GM10248 (cell line): ENCODE measurements at regions of chr11 and their contacts with region 1.

Region 1: GRCh38 chr11:118198370-118198769 is 21.9 kb upstream of the SCN2B start:
- DNase-seq: peak; percentile 80
- CTCF ChIP-seq: peak; percentile 89

Region 2: GRCh38 chr11:118002541-118003423 is 195.6 kb before region 1 on chr11:
- CTCF ChIA-PET with region 1: no interaction called
- POLR2A ChIA-PET with region 1: no interaction called
- DNase-seq: no peak
- CTCF ChIP-seq: no peak

Region 3: GRCh38 chr11:118171269-118172062 is 26.9 kb before region 1 on chr11:
- CTCF ChIA-PET with region 1: interaction called, 21 read pairs
- POLR2A ChIA-PET with region 1: no interaction called
- DNase-seq: peak; percentile 88
- CTCF ChIP-seq: peak; percentile 93

Region 4: DNA sequence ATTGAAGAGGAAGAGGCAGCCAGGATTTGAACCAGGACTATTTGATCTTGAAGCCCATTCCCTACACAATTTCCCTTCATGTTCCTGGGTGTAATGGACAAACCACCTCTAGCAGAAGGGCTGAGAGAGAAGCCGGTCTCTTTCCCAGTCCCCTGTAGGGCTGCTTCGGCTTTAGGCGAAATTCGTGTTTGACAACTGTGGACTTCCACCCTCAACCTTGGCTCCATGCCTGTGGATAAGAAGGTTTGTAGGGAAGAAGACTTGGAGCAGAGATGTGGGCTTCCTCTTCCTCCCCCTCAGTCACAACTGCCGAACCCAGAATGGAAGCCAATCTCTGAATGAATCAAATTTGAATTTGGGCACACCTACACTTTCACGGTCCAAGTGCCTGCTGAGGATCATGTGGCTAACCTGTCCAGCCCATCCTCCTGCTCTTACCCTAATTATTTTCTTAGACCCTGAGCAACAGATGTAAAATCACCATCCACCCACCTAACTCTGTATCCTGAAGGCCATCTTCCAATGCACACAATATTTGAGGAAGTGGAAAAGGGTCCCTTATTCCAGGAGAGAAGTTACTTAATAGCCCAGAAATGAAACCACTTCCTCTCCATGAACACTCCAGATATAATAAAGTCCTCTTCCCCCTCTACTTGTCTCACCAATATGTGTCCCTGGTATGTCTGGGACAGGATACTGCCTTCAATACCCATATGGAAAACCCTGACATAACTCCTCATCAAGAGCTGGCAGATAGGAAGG is 11.8 kb before region 1 on chr11:
- CTCF ChIA-PET with region 1: interaction called, 15 read pairs
- POLR2A ChIA-PET with region 1: no interaction called
- DNase-seq: no peak
- CTCF ChIP-seq: no peak

Region 5: GRCh38 chr11:118227865-118228785 is 29.8 kb after region 1 on chr11:
- CTCF ChIA-PET with region 1: interaction called, 10 read pairs
- POLR2A ChIA-PET with region 1: no interaction called
- DNase-seq: peak; percentile 35
- CTCF ChIP-seq: no peak

Region 6: DNA sequence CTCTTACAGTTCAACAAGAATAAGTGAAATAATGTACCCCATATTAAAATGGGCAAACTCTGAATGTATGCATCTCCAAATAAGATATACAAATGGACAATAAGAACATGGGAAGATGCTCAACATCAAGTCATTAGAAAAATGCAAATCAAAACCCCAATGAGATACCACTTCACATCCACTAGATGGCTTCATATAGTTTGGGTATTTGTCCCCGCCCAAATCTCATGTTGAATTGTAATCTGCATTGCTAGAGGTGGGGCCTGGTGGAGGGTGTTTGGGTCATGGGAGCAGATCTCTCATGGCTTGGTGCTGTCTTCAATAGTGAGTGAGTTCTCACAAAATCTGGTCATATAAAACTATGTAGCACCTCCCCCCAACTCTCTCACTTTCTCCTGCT is 60.0 kb after region 1 on chr11:
- CTCF ChIA-PET with region 1: interaction called, 20 read pairs
- POLR2A ChIA-PET with region 1: no interaction called
- DNase-seq: no peak
- CTCF ChIP-seq: no peak

Region 7: GRCh38 chr11:118290923-118291322 is 92.6 kb after region 1 on chr11:
- CTCF ChIA-PET with region 1: interaction called, 15 read pairs
- POLR2A ChIA-PET with region 1: no interaction called
- DNase-seq: peak; percentile 50
- CTCF ChIP-seq: peak; percentile 61

Region 8: DNA sequence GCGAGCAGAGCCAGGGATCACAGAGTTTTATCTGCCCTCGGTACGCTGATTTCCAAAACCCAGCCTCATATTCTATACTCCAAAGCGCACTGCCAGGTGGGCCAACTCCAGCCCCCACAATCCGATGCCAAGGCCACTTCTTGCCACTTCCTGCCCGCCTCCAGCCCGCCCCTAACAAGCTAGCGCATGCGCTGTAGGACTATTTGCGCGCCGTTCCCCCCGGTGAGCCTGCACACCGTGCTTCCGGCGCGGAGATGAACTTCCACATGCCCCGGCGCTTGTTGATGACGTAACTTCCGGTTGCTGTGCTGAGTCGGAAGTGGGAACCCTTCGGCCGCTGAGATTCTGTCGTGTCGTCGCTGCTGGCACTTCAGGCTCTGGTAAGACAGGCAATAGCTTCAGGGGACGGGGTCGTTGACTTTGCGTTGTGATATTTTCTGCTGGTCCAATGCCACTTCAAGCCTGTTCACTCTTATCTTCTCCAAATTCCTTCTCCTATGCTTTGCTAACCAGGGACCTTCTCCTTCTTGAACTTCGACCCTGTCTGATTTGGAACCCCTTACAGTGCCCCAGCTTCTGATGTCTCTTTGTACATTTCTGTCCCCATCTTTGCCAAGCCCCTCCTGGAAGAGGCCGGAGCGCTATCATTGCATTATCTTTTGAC is 161.1 kb after region 1 on chr11 and contains the start of gene UBE4A:
- CTCF ChIA-PET with region 1: interaction called, 10 read pairs
- POLR2A ChIA-PET with region 1: no interaction called
- DNase-seq: peak; percentile 89
- CTCF ChIP-seq: no peak

Region 9: DNA sequence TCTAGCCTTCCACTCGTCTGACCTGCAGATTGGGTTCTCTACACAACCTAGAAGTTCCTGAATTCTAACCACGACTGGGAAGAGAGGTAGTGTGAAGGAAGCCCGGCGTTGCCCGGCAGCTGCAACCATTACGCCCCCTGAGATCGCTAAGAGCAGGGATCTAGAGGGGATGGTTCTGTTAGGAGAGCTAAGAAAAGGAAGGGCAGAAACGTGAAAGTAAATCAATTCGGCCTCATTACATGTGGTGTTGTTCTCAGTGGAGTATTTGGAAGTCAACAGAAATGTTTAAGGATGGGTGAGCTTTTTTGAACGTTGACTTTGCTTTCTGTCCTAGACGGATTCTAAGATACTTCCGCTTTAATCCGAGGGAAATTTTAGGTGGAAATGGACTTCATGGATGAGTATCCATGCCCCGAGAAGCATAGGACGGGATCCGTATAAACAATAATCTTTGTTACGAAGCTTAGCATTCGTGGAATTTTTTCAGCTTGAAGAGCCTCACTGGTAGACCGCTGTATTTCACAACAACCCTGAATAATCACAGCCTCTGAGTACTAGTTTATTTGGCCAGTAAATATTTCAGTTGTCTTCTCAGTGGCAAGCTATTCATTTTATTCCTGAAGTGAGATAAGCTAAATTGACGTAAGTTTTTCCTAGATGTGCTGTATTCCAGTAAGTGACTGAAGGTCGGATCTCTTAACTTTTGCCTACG is 203.7 kb after region 1 on chr11:
- CTCF ChIA-PET with region 1: no interaction called
- POLR2A ChIA-PET with region 1: no interaction called
- DNase-seq: no peak
- CTCF ChIP-seq: no peak